ENCODE measurements at regions of chr9 and their contacts with region 1.

Region 1: GRCh38 chr9:116860509-116861120 is 173.5 kb downstream of the TRIM32 start:
- DNase-seq: no peak
- H3K4me3 Mint-ChIP-seq: no peak overlapping the region
- H3K27ac Mint-ChIP-seq: no peak overlapping the region
- H3K4me1 Mint-ChIP-seq: no peaks in the 10 kb centered on the region
- H3K27me3 Mint-ChIP-seq: no peaks in the 10 kb centered on the region

Region 2: GRCh38 chr9:114898741-114899140 is 1961.9 kb before region 1 on chr9:
- intact Hi-C with region 1: no loop called
- DNase-seq: peak; percentile 84
- H3K4me3 Mint-ChIP-seq: no peak overlapping the region
- H3K27ac Mint-ChIP-seq: no peak overlapping the region
- H3K4me1 Mint-ChIP-seq: peaks cover 55% of the 10 kb centered on the region
- H3K27me3 Mint-ChIP-seq: no peaks in the 10 kb centered on the region

Region 3: DNA sequence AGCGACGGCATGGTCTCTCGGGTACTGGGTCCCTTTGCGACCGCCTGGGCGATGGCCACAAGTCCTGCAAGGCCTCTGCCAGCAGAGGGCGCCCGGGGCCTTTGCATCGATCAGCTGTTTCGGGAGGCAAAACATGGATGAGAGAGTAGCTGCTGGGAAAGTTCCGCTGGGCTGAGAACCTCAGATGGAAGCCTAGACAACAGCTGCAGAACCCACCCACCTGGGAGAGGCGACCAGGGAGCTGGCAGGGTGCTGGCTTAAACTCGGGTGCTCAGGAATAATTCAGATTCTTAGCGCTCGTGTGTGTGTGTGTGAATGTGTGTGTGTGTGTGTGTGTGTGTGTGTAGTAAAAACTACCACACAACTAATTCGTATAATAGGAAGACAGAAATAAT is 123.5 kb before region 1 on chr9:
- intact Hi-C with region 1: loop called (anchors 5 kb)
- DNase-seq: peak; percentile 32
- H3K4me3 Mint-ChIP-seq: no peak overlapping the region
- H3K27ac Mint-ChIP-seq: no peak overlapping the region
- H3K4me1 Mint-ChIP-seq: no peaks in the 10 kb centered on the region
- H3K27me3 Mint-ChIP-seq: peaks cover 2% of the 10 kb centered on the region

Region 4: DNA sequence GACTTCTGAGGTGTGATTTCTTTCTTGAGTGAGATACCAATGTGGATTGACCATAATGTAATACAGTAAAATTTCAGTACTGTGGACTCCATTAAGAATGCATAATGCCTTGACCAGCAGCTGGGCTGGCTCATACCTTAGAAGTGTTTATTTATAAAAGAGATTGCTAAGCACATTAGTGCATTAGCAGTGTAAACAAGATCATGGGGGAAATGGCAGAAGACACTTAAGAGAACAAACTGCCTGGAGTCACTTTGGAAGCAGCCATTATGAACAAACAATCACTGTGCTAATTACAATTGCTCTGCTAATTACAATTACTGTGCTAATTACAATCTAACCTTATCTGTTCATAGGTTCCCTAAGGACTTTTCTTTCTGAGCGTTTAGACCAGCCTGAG is 69.3 kb before region 1 on chr9:
- intact Hi-C with region 1: no loop called
- DNase-seq: no peak
- H3K4me3 Mint-ChIP-seq: no peak overlapping the region
- H3K27ac Mint-ChIP-seq: no peak overlapping the region
- H3K4me1 Mint-ChIP-seq: no peaks in the 10 kb centered on the region
- H3K27me3 Mint-ChIP-seq: no peaks in the 10 kb centered on the region

Measured in activated T-helper 2 cell treated with anti-CD3 and anti-CD28 coated beads, Interferon-gamma antibody, Interleukin-2, Interleukin-4, amounts not matched to agents 10 μg/mL and 5 μg/mL and 100 μg/mL, durations not matched to agents 14 hours and 24 hours and 36 hours (primary cell).